ENCODE measurements at regions of chr4 and their contacts with region 1.

Region 1: DNA sequence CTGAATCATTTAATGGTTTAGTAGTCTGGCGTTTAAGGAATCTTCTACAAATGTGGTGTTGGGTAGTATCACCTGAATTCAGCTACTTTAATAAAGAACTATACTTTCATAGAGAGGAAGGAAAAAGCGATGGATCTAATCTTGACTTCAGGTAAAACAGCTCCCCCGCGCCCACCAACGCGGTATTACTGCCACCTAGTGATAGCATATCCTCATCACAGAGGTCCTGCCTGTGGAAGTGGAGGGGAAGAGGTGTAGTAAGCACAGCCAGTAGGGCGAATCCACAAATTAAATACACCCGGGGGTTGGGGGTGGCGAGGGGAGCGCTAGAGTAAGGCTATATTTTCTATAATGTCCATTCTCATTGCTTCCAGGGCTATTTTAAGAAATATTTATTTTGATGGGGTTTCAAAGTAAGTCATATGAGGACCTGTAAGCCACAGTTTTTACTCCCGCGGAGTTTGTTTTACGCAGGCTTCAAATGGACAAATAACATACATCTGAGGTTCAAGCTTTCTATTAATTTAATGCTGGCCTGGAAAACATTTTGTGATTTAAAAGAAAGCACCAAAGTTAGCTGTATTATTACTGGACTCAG is 8.3 kb upstream of the DAPP1 start:
- DNase-seq: peak; percentile 85
- H3K4me3 Mint-ChIP-seq: no peak overlapping the region
- H3K27ac Mint-ChIP-seq: no peak overlapping the region
- H3K4me1 Mint-ChIP-seq: no peaks in the 10 kb centered on the region
- H3K27me3 Mint-ChIP-seq: peaks cover 3% of the 10 kb centered on the region

Region 2: DNA sequence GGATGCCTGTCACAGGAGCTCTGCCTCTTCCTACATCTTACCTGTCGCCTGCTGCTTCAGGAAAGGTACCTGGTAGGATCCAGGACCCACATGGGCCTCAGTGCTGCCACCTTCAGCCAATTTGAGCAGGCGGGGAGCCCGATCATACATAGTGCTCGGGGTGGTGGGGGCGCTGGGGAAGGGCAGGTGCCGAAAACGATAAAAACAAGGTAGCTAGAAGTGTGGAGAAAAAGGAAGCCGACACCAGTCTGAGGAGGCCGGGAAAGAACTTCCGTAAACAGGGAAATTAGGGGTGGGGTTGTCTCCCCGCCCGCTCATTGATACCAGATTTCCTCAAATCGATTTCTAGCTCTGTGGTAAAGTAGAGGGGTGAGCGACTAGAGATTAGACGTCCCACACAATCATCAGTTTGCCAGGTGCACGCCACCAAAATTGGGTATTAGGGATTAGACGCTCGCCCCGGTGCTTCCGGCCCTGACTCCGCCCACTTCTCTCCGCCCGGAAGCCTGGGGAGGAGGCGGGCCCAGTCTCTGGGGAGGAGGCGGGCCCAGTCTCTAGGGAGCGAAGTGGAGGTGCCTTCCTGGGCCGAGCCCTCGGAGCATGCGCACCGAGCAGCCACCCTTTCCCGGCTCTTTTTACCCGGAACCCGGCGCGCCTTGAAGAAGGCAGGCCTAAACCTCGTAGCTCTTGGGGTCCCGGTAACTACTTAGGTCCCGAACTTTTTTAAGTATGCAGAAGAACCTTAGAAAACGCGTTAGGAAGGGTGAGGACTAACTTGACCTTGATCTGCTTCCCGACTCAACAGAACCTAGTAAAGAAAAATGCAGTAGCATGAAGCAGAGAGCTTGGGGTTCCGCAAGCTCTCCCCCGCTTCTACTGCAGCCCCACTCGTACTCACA is 1665.1 kb before region 1 on chr4 and contains the start of gene STPG2:
- CTCF ChIA-PET with region 1: no interaction called
- POLR2A ChIA-PET with region 1: no interaction called
- intact Hi-C with region 1: loop called (anchors 10 kb)
- DNase-seq: peak; percentile 95
- H3K4me3 Mint-ChIP-seq: peak within 1 kb of the TSS; percentile 95
- H3K27ac Mint-ChIP-seq: peak within 1 kb of the TSS; percentile 98
- H3K4me1 Mint-ChIP-seq: peaks cover 20% of the 10 kb centered on the region
- H3K27me3 Mint-ChIP-seq: no peaks in the 10 kb centered on the region
- total RNA-seq, gene STPG2: not detected

Region 3: DNA sequence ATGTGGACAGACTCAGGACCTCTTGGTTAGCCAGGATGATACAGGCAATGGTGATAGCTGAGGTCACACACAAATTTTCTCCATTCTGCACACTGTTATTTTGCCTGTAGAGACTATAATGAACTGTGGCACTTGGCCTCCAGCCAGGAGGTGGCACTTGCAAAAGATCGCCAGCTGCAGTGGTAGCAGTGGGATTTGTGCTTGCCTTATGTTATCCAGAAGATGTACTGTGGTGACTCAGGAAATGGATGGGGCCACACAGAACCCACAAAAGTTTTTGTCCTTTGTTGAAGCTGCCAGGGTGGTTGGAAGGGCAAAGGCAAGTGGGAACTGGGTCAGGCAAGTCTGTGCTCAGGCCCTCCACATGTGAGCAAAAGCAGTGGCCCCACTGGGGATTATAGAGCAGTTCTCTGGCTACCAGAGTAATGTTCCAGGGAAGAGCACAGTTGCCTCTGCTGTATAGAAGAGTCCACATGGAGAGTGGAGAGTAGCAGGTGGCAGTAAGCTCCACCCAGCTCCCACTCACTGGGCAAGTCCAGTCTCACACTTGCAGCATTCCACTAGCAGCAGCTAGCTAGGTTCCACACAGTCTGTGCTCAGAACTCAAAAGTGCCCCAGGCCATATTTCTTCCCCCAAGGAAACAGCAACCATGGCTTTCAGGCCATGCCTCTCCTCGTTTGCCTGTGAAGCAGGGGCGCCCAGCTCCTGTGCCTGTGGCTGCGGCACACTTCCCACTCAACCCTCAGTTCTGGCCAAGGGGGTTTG is 303.4 kb before region 1 on chr4:
- CTCF ChIA-PET with region 1: no interaction called
- POLR2A ChIA-PET with region 1: no interaction called
- intact Hi-C with region 1: loop called (anchors 5 kb)
- DNase-seq: no peak
- H3K4me3 Mint-ChIP-seq: no peak overlapping the region
- H3K27ac Mint-ChIP-seq: no peak overlapping the region
- H3K4me1 Mint-ChIP-seq: peaks cover 46% of the 10 kb centered on the region
- H3K27me3 Mint-ChIP-seq: no peaks in the 10 kb centered on the region

Region 4: GRCh38 chr4:99624141-99624719 is 184.1 kb before region 1 on chr4:
- CTCF ChIA-PET with region 1: interaction called, 3 read pairs
- POLR2A ChIA-PET with region 1: no interaction called
- intact Hi-C with region 1: loop called (anchors 10 kb)
- DNase-seq: peak; percentile 31
- H3K4me3 Mint-ChIP-seq: no peak overlapping the region
- H3K27ac Mint-ChIP-seq: no peak overlapping the region
- H3K4me1 Mint-ChIP-seq: peaks cover 3% of the 10 kb centered on the region
- H3K27me3 Mint-ChIP-seq: peaks cover 2% of the 10 kb centered on the region

Region 5: GRCh38 chr4:99824070-99824599 is 15.8 kb after region 1 on chr4:
- CTCF ChIA-PET with region 1: interaction called, 12 read pairs
- POLR2A ChIA-PET with region 1: no interaction called
- intact Hi-C with region 1: no loop called
- DNase-seq: no peak
- H3K4me3 Mint-ChIP-seq: no peak overlapping the region
- H3K27ac Mint-ChIP-seq: peak overlapping the region; percentile 56
- H3K4me1 Mint-ChIP-seq: peaks cover 73% of the 10 kb centered on the region
- H3K27me3 Mint-ChIP-seq: no peaks in the 10 kb centered on the region

Region 6: GRCh38 chr4:99855678-99856077 is 47.3 kb after region 1 on chr4:
- CTCF ChIA-PET with region 1: interaction called, 11 read pairs
- POLR2A ChIA-PET with region 1: interaction called, 3 read pairs
- intact Hi-C with region 1: no loop called
- DNase-seq: peak; percentile 37
- H3K4me3 Mint-ChIP-seq: no peak overlapping the region
- H3K27ac Mint-ChIP-seq: peak overlapping the region; percentile 7
- H3K4me1 Mint-ChIP-seq: peaks cover 70% of the 10 kb centered on the region
- H3K27me3 Mint-ChIP-seq: no peaks in the 10 kb centered on the region

Region 7: GRCh38 chr4:99894161-99894997 is 86.0 kb after region 1 on chr4 and contains the start of gene LAMTOR3:
- CTCF ChIA-PET with region 1: interaction called, 11 read pairs
- POLR2A ChIA-PET with region 1: no interaction called
- intact Hi-C with region 1: no loop called
- DNase-seq: peak; percentile 94
- H3K4me3 Mint-ChIP-seq: peak within 1 kb of the TSS; percentile 98
- H3K27ac Mint-ChIP-seq: peak within 1 kb of the TSS; percentile 87
- H3K4me1 Mint-ChIP-seq: peaks cover 39% of the 10 kb centered on the region
- H3K27me3 Mint-ChIP-seq: no peaks in the 10 kb centered on the region
- total RNA-seq, gene LAMTOR3: 21.8 to 26.1 TPM